Activated T-helper 1 cell treated with anti-CD3 and anti-CD28 coated beads, Interleukin-12 subunit alpha, Interleukin-12 subunit beta, Interleukin-2, Interleukin-4 antibody, amounts not matched to agents 30 ng/mL and 10 ng/mL and 1 ng/mL, durations not matched to agents 14 hours and 24 hours and 36 hours (primary cell): ENCODE measurements at regions of chr20 and their contacts with region 1.

Region 1: DNA sequence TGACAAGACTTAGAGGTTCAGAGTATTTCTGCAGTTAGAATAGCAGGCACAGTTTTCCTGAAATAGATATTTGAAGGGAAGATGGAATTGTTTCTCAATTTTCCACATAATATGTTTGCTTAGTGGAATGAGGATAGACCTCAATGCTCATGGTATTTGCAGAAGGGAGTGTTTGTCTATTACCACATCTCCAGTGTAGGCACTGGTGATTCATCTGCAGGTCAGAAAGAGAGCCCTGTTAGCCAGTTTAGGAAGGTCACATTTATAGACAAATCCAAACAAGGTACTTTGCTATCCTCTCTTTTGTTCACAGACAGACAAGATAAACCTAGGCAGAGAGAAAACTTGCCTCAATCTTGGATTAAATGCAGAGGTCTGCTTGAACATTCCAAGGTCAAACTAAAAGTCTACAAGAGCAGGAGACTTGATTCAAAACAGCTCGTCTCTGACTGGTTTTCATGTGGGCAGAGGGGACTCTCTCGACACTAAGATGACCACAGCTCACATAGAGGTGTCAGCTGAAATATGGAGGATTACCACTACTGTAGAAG is 22.8 kb downstream of the ISM1 start:
- DNase-seq: no peak
- H3K4me3 Mint-ChIP-seq: no peak overlapping the region
- H3K27ac Mint-ChIP-seq: no peak overlapping the region
- H3K4me1 Mint-ChIP-seq: peaks cover 29% of the 10 kb centered on the region
- H3K27me3 Mint-ChIP-seq: peaks cover 2% of the 10 kb centered on the region

Region 2: GRCh38 chr20:13261460-13262301 is 17.8 kb after region 1 on chr20:
- intact Hi-C with region 1: loop called (anchors 1 kb)
- DNase-seq: peak; percentile 20
- H3K4me3 Mint-ChIP-seq: no peak overlapping the region
- H3K27ac Mint-ChIP-seq: no peak overlapping the region
- H3K4me1 Mint-ChIP-seq: no peaks in the 10 kb centered on the region
- H3K27me3 Mint-ChIP-seq: no peaks in the 10 kb centered on the region

Region 3: DNA sequence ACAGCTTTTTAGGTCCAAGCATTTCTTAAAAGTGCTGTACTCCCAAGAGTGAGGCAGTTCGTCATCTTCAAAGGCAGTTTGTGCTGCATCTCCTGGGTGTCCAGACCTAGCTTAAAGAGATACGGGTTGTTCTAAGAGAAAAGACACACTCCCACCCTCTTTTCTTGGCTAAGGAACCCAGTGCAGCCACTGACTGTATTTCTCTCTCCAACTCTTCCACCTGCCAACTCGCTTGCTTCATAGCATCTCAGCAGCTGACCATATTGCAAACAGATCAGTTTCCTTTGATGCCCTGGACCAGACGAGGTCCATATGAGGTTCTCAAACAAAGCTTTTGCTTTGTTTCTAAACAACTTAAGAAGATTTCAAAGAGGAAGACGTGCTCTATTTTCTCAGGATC is 78.3 kb after region 1 on chr20:
- intact Hi-C with region 1: no loop called
- DNase-seq: no peak
- H3K4me3 Mint-ChIP-seq: no peak overlapping the region
- H3K27ac Mint-ChIP-seq: no peak overlapping the region
- H3K4me1 Mint-ChIP-seq: peaks cover 13% of the 10 kb centered on the region
- H3K27me3 Mint-ChIP-seq: peaks cover 7% of the 10 kb centered on the region

Region 4: GRCh38 chr20:13819885-13820645 is 576.2 kb after region 1 on chr20:
- intact Hi-C with region 1: loop called (anchors 2 kb)
- DNase-seq: no peak
- H3K4me3 Mint-ChIP-seq: no peak overlapping the region
- H3K27ac Mint-ChIP-seq: no peak overlapping the region
- H3K4me1 Mint-ChIP-seq: peaks cover 23% of the 10 kb centered on the region
- H3K27me3 Mint-ChIP-seq: no peaks in the 10 kb centered on the region